T-cell (primary cell): ENCODE measurements at regions of chr11 and their contacts with region 1.

Region 1: DNA sequence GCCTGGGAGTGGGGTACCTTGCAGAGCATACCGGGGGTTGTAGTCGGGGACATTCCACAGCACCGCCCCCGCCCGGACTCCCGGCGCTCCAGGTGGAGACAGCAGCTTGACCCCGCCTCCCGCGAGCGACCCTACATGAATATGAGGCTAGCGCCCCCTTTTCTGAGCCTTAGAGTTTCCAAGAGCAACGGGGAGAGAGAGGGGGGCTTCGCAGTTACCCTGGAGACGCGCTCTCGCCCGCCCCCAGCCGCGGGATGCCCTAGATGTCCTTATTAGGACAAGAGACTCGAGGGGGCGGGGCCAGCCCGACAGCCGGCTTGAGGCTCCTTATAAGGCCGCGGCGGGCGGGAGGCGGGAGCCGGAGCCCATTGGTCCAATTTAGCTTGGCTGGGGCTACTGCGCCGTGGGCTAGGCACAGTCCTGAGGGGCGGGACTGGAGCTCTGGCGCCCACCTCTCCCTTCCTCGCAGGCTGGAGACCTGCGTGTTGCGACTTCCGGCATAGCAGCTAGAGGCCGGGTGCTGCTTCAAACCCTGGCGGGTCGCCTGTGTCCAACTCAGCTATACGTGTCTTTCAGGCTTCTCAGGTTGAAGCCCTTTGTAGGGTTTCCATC is 927 bp upstream of the MUS81 start:
- DNase-seq: peak; percentile 89 to 98 (median 95)
- ATAC-seq: peak; percentile 59 to 64 (median 62)
- H3K4me3 ChIP-seq: peak overlapping the region; percentile 90 to 93
- H3K4me3 Mint-ChIP-seq: peak overlapping the region; percentile 92 to 97 (median 97)
- H3K27ac ChIP-seq: peak overlapping the region; percentile 83
- H3K27ac Mint-ChIP-seq: peak overlapping the region; percentile 95 to 97
- H3K4me1 ChIP-seq: peaks cover 22 to 77% of the 10 kb centered on the region in 2 experiments
- H3K4me1 Mint-ChIP-seq: peaks cover 48 to 58% (median 56%) of the 10 kb centered on the region in 3 donors
- H3K27me3 ChIP-seq: no peaks in the 10 kb centered on the region
- H3K27me3 Mint-ChIP-seq: no peaks in the 10 kb centered on the region

Region 2: DNA sequence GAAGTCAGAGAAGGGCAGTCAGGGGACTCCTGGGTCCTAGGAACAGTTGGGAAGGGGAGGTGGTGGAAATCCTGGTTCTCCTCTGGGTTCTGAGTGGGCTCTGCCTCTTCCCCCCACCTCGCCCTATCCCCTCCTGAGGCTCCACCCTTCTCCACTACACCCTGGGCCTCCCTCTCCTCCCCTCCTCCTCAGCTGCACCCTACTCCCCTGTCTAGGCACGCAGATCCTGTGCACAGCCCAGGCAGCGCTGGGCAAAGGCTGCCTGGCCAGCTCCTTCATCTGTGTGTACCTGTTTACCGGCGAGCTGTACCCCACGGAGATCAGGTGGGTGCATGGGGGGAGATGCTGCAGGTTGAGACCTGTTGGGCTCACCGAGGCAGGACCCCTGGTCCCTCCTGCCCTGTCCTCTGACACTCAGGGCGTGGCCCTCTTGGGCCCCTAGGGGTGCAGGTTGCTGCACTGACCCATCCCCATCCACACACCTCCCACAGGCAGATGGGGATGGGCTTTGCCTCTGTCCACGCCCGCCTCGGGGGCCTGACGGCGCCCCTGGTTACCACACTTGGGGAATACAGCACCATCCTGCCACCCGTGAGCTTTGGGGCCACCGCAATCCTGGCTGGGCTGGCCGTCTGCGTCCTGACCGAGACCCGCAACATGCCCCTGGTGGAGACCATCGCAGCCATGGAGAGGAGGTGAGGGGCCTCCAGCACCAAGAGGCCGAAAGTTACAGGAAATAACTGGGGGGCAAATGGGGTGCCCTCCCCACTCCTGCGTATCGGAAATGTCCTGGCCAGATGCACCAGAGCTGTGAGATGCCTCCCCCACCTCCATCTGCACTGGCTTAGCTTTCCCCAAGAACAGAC is 622.9 kb before region 1 on chr11:
- CTCF ChIA-PET with region 1: no interaction called
- POLR2A ChIA-PET with region 1: no interaction called
- DNase-seq: no peak
- ATAC-seq: no peak
- H3K4me3 ChIP-seq: no peak overlapping the region
- H3K4me3 Mint-ChIP-seq: no peak overlapping the region
- H3K27ac ChIP-seq: no peak overlapping the region
- H3K27ac Mint-ChIP-seq: no peak overlapping the region
- H3K4me1 ChIP-seq: no peaks in the 10 kb centered on the region
- H3K4me1 Mint-ChIP-seq: no peaks in the 10 kb centered on the region
- H3K27me3 ChIP-seq: peaks cover 0 to 15% of the 10 kb centered on the region in 2 experiments
- H3K27me3 Mint-ChIP-seq: peaks cover 1 to 4% of the 10 kb centered on the region in 2 donors

Region 3: DNA sequence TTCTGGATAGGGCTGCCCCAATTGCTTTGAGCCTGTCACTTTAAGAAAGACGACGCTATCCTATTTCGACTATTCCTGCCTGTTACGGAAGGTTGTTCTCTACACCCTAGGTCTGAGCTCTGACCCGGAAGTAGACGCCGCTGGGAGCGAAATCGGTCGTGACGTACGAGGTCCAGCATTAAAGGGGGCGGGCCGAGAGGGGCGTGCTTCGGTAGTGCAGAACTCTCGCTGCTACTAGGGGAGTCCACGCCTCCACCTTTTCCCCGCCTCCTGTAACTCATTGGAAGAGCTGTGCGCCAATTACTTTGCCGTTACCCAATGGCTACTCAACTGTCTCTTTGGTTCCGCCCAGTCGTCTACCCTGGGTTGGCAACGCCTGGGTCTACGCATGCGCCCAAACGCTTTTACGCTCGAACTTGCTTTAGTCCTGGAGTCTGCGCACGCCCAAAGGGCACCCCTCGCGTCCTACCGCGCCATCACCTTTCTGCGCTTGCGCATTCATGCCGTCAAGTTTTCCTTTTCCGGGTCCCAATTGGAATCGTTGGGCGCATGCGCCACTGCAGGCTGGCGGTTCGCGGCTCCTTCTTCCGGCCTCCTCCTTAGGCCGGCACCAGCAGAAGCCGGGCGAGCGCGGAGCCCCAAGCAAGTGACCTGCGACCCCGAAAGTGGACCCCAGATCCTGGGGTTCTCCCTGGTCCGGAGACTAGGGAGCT is 243.9 kb before region 1 on chr11 and contains the start of gene PCNX3:
- CTCF ChIA-PET with region 1: interaction called in 1 of 2 experiments, 11 read pairs
- POLR2A ChIA-PET with region 1: interaction called in 1 of 2 experiments, 6 read pairs
- DNase-seq: peak; percentile 99 to 100 (median 100)
- ATAC-seq: peak; percentile 86 to 90 (median 88)
- H3K4me3 ChIP-seq: peak within 1 kb of the TSS; percentile 94 to 99
- H3K4me3 Mint-ChIP-seq: peak within 1 kb of the TSS; percentile 91 to 96 (median 93)
- H3K27ac ChIP-seq: peak within 1 kb of the TSS; percentile 99
- H3K27ac Mint-ChIP-seq: peak within 1 kb of the TSS; percentile 95 to 97
- H3K4me1 ChIP-seq: peaks cover 39 to 79% of the 10 kb centered on the region in 2 experiments
- H3K4me1 Mint-ChIP-seq: peaks cover 45 to 56% (median 52%) of the 10 kb centered on the region in 3 donors
- H3K27me3 ChIP-seq: no peaks in the 10 kb centered on the region
- H3K27me3 Mint-ChIP-seq: no peaks in the 10 kb centered on the region
- total RNA-seq, gene PCNX3: 54.2 to 74.7 (median 66.8) TPM

Region 4: GRCh38 chr11:65810046-65810868 is 49.0 kb before region 1 on chr11:
- CTCF ChIA-PET with region 1: no interaction called
- POLR2A ChIA-PET with region 1: no interaction called
- DNase-seq: peak in 2 of 35 experiments; percentile 15 to 52
- ATAC-seq: peak; percentile 61 to 91 (median 70)
- H3K4me3 ChIP-seq: no peak overlapping the region
- H3K4me3 Mint-ChIP-seq: no peak overlapping the region
- H3K27ac ChIP-seq: no peak overlapping the region
- H3K27ac Mint-ChIP-seq: no peak overlapping the region
- H3K4me1 ChIP-seq: no peaks in the 10 kb centered on the region
- H3K4me1 Mint-ChIP-seq: peaks cover 0 to 4% (median 0%) of the 10 kb centered on the region in 3 donors
- H3K27me3 ChIP-seq: peaks cover 0 to 22% of the 10 kb centered on the region in 2 experiments
- H3K27me3 Mint-ChIP-seq: peaks cover 4 to 5% of the 10 kb centered on the region in 2 donors

Region 5: GRCh38 chr11:65873318-65874156 is 14.2 kb after region 1 on chr11:
- CTCF ChIA-PET with region 1: interaction called, 5 to 12 read pairs
- POLR2A ChIA-PET with region 1: interaction called in 1 of 2 experiments, 4 read pairs
- DNase-seq: peak; percentile 86 to 99 (median 93)
- ATAC-seq: peak; percentile 87 to 95 (median 93)
- H3K4me3 ChIP-seq: peak overlapping the region; percentile 67 to 77
- H3K4me3 Mint-ChIP-seq: peak overlapping the region; percentile 80 to 91 (median 87)
- H3K27ac ChIP-seq: peak overlapping the region; percentile 92
- H3K27ac Mint-ChIP-seq: peak overlapping the region; percentile 61 to 89
- H3K4me1 ChIP-seq: peaks cover 5 to 51% of the 10 kb centered on the region in 2 experiments
- H3K4me1 Mint-ChIP-seq: peaks cover 14 to 38% (median 21%) of the 10 kb centered on the region in 3 donors
- H3K27me3 ChIP-seq: peaks cover 0 to 7% of the 10 kb centered on the region in 2 experiments
- H3K27me3 Mint-ChIP-seq: no peaks in the 10 kb centered on the region